IMR-90 (cell line): ENCODE measurements at regions of chr20 and their contacts with region 1.

Region 1: DNA sequence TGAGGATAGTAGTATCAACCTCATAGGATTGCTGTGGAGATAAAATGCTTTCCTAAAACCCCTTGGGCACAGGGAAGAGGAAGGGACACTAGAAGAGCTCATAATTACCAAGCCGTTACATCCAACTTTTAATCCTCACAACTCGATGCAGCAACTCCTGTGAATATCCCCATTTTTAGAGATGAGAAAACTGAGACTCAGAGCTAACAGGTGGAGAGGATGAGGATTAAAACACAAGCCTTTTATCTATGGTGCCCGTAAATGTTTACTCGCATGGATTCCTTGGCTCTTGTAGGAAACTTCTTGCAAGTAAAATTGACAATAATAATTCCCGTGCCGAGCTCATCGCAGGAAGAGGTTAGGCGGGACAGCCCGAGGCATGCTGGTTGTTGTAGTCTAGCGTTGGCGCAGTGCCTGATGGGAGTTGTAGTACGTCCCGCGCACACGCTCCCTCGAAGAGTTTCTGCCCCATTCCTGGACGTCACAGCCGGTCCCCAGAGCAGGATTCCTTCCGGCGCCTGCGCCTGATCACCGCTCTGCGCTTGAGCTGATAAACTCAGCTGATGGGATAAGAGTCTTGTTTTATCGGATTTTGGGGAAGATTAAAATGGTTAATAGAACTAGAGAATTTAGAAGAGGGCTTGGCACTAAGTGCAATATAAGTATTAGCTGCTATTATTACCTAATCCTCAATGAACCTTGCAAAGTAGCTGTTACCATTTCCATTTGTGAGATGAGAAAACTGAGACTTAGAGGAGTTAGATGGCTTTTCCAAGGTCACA is 2.8 kb upstream of the UBE2V1 start:
- DNase-seq: peak; percentile 97
- ATAC-seq: peak; percentile 79
- H3K4me3 ChIP-seq: peak overlapping the region; percentile 56
- H3K27ac ChIP-seq: peak overlapping the region; percentile 30
- H3K4me1 ChIP-seq: peaks cover 18% of the 10 kb centered on the region
- H3K27me3 ChIP-seq: no peaks in the 10 kb centered on the region
- CTCF ChIP-seq: no peak
- POLR2A ChIP-seq: no peak
- RAD21 ChIP-seq: no peak

Region 2: GRCh38 chr20:50129662-50130355 is 14.0 kb after region 1 on chr20:
- CTCF ChIA-PET with region 1: interaction called, 3 read pairs
- POLR2A ChIA-PET with region 1: no interaction called
- dilution Hi-C with region 1: no loop called
- in situ Hi-C with region 1: no loop called
- intact Hi-C with region 1: loop called (anchors 2 kb)
- DNase-seq: peak; percentile 27
- ATAC-seq: peak; percentile 8; the same call in 1 of the 2 replicates
- H3K4me3 ChIP-seq: no peak overlapping the region
- H3K27ac ChIP-seq: peak overlapping the region; percentile 61
- H3K4me1 ChIP-seq: peaks cover 13% of the 10 kb centered on the region
- H3K27me3 ChIP-seq: no peaks in the 10 kb centered on the region
- CTCF ChIP-seq: no peak
- POLR2A ChIP-seq: no peak
- RAD21 ChIP-seq: no peak